Activated T-helper 1 cell treated with anti-CD3 and anti-CD28 coated beads, Interleukin-12 subunit alpha, Interleukin-12 subunit beta, Interleukin-2, Interleukin-4 antibody, amounts not matched to agents 30 ng/mL and 10 ng/mL and 1 ng/mL, durations not matched to agents 14 hours and 24 hours and 36 hours (primary cell): ENCODE measurements at regions of chr7 and their contacts with region 1.

Region 1: GRCh38 chr7:100221231-100221718 is 1.5 kb downstream of the PVRIG start:
- DNase-seq: peak; percentile 72
- H3K4me3 Mint-ChIP-seq: peak overlapping the region; percentile 96
- H3K27ac Mint-ChIP-seq: peak overlapping the region; percentile 99
- H3K4me1 Mint-ChIP-seq: peaks cover 60% of the 10 kb centered on the region
- H3K27me3 Mint-ChIP-seq: no peaks in the 10 kb centered on the region

Region 2: GRCh38 chr7:99123571-99124041 is 1097.7 kb before region 1 on chr7:
- intact Hi-C with region 1: no loop called
- DNase-seq: no peak
- H3K4me3 Mint-ChIP-seq: no peak overlapping the region
- H3K27ac Mint-ChIP-seq: no peak overlapping the region
- H3K4me1 Mint-ChIP-seq: peaks cover 26% of the 10 kb centered on the region
- H3K27me3 Mint-ChIP-seq: no peaks in the 10 kb centered on the region

Region 3: DNA sequence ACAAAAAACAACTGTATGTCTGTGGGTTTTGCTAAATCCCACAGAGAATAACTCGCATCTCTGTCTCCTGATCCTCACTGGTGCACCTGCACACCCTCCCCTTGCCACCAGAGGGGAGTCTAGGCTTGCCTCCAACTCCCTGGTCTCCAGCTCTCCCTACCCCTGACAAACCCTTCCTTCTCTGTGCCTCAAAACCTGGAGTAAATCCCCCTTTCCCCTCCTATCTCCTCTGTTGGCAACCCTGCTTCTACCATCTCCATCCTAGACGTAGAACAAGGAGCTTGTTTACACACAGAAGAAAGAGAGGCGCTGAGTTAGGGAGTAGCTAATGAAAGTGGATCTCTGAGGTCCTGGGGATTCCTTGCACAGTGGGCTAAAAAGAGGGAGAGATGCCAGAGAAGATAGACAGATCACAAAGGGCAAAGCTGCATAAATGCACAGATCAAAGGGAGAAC is 88.6 kb before region 1 on chr7:
- intact Hi-C with region 1: loop called (anchors 1 kb)
- DNase-seq: peak; percentile 52
- H3K4me3 Mint-ChIP-seq: no peak overlapping the region
- H3K27ac Mint-ChIP-seq: no peak overlapping the region
- H3K4me1 Mint-ChIP-seq: peaks cover 16% of the 10 kb centered on the region
- H3K27me3 Mint-ChIP-seq: no peaks in the 10 kb centered on the region

Region 4: GRCh38 chr7:100177045-100178001 is 44.0 kb before region 1 on chr7 and contains the starts of genes GPC2 and STAG3:
- intact Hi-C with region 1: loop called (anchors 1 kb)
- DNase-seq: peak; percentile 97
- H3K4me3 Mint-ChIP-seq: peak within 1 kb of the TSS; percentile 82
- H3K27ac Mint-ChIP-seq: peak within 1 kb of the TSS; percentile 83
- H3K4me1 Mint-ChIP-seq: peaks cover 46% of the 10 kb centered on the region
- H3K27me3 Mint-ChIP-seq: peaks cover 15% of the 10 kb centered on the region
- total RNA-seq, gene GPC2: 3.9 and 4.8 TPM in 2 replicates
- total RNA-seq, gene STAG3: 25.0 and 30.6 TPM in 2 replicates

Region 5: GRCh38 chr7:100208911-100209408 is 12.3 kb before region 1 on chr7:
- intact Hi-C with region 1: loop called (anchors 1 kb)
- DNase-seq: peak; percentile 48
- H3K4me3 Mint-ChIP-seq: peak overlapping the region; percentile 71
- H3K27ac Mint-ChIP-seq: peak overlapping the region; percentile 80
- H3K4me1 Mint-ChIP-seq: peaks cover 49% of the 10 kb centered on the region
- H3K27me3 Mint-ChIP-seq: no peaks in the 10 kb centered on the region

Region 6: GRCh38 chr7:100342765-100343164 is 121.5 kb after region 1 on chr7:
- intact Hi-C with region 1: loop called (anchors 2 kb)
- DNase-seq: no peak
- H3K4me3 Mint-ChIP-seq: no peak overlapping the region
- H3K27ac Mint-ChIP-seq: no peak overlapping the region
- H3K4me1 Mint-ChIP-seq: peaks cover 39% of the 10 kb centered on the region
- H3K27me3 Mint-ChIP-seq: no peaks in the 10 kb centered on the region